PC-3 (cell line): ENCODE measurements at regions of chr19 and their contacts with region 1.

Region 1: GRCh38 chr19:58466760-58467589 is at the start of gene ZNF324:
- DNase-seq: peak; percentile 99
- ATAC-seq: peak; percentile 94
- H3K4me3 ChIP-seq: peak within 1 kb of the TSS; percentile 80
- H3K27ac ChIP-seq: peak within 1 kb of the TSS; percentile 9; the same call in 1 of the 2 replicates
- H3K4me1 ChIP-seq: peaks cover 9% of the 10 kb centered on the region; the same call in 1 of the 2 replicates
- H3K27me3 ChIP-seq: no peaks in the 10 kb centered on the region
- CTCF ChIP-seq: peak; percentile 36
- total RNA-seq, gene ZNF324: 14.8 and 15.9 TPM in 2 replicates

Region 2: GRCh38 chr19:58305065-58305931 is 161.7 kb before region 1 on chr19 and contains the start of gene ERVK3-1:
- CTCF ChIA-PET with region 1: no interaction called
- POLR2A ChIA-PET with region 1: no interaction called
- intact Hi-C with region 1: loop called (anchors 1 kb)
- DNase-seq: peak; percentile 98
- ATAC-seq: peak; percentile 100
- H3K4me3 ChIP-seq: peak within 1 kb of the TSS; percentile 81
- H3K27ac ChIP-seq: peak within 1 kb of the TSS; percentile 8
- H3K4me1 ChIP-seq: peaks cover 8% of the 10 kb centered on the region
- H3K27me3 ChIP-seq: no peaks in the 10 kb centered on the region
- CTCF ChIP-seq: no peak
- total RNA-seq, gene ERVK3-1: 104 and 116 TPM in 2 replicates

Region 3: GRCh38 chr19:58408152-58409009 is 58.6 kb before region 1 on chr19 and contains the start of gene ZNF584:
- CTCF ChIA-PET with region 1: no interaction called
- POLR2A ChIA-PET with region 1: no interaction called
- intact Hi-C with region 1: loop called (anchors 1 kb)
- DNase-seq: peak; percentile 96
- ATAC-seq: peak; percentile 94
- H3K4me3 ChIP-seq: peak within 1 kb of the TSS; percentile 78
- H3K27ac ChIP-seq: 0 out of 2 replicates have a peak within 1 kb of the TSS, but pooled peaks have one; percentile 0
- H3K4me1 ChIP-seq: peaks cover 17% of the 10 kb centered on the region
- H3K27me3 ChIP-seq: no peaks in the 10 kb centered on the region
- CTCF ChIP-seq: peak; percentile 53; the same call in 1 of the 2 replicates
- total RNA-seq, gene ZNF584: 49.2 and 73.8 TPM in 2 replicates

Region 4: DNA sequence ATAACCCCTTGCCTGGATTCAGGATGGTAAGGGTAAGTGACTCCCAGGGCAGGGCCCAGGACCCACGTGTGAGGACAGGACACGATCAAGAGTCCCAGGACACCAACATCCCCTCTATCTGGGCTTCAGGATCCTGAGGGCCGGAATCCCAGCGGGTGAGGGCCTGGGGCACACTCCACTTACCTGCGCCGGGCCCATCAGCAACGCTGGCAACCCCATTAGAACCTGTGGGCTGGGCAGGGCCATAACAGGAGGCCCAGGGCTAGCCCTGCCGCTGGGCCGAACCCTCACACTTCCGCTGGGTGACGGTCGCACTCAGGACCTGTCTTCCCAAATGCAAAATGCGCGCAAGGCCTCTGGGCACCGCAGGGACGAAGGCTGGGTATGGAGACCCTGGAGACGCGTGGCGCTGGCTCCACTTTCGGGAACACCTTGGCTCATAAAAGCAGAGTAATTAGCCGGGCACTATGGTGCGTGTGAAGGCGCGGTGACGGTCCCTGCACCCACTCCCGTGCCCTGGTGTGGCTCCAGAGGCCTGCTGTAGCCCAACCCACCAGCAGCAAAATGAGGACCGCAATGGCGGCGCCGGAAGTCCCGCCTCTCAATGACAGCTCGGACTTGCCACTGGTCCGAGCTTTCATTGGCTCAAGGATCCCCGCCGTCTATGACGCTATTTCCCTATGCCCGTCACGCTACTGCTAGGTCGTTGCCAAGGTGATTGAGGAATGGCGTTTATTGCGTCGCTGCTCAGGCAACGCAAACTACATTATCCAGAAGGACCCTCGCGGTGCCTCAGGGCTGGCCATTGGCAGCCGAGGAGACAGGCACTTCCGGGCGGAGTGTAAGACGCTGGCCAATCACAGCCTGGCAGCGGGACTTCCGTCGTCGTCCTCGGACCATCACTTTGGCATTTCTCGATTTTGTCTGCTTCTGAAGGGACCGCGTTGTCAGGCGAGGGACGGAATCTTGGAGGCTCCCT is 27.1 kb before region 1 on chr19 and contains the start of gene ZNF132:
- CTCF ChIA-PET with region 1: no interaction called
- POLR2A ChIA-PET with region 1: no interaction called
- intact Hi-C with region 1: no loop called
- DNase-seq: no peak
- ATAC-seq: no peak
- H3K4me3 ChIP-seq: no peak within 1 kb of the TSS
- H3K27ac ChIP-seq: no peak within 1 kb of the TSS
- H3K4me1 ChIP-seq: no peaks in the 10 kb centered on the region
- H3K27me3 ChIP-seq: no peaks in the 10 kb centered on the region
- CTCF ChIP-seq: no peak
- total RNA-seq, gene ZNF132: not detected in 2 replicates

Region 5: DNA sequence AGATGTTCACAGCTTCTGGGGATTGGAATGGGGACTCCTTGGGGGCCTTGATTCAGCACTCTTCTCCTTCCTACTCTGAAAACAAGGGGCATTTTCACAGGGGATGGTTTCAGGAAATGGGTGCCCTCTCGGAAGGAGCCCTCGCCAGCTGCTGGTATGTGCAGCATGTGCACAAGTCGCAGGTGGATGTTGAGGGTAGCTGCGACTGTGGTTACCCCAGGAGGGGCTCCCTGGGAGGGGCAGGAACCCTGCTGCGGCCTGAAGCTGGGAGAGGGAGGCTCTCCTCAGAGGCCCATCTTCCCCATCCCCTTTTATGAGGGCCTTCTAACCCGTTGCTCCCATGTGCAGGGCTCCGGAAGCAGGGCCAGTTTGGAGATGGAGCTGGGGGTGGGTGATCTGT is 15.4 kb after region 1 on chr19:
- CTCF ChIA-PET with region 1: no interaction called
- POLR2A ChIA-PET with region 1: no interaction called
- intact Hi-C with region 1: no loop called
- DNase-seq: no peak
- ATAC-seq: no peak
- H3K4me3 ChIP-seq: no peak overlapping the region
- H3K27ac ChIP-seq: no peak overlapping the region
- H3K4me1 ChIP-seq: no peaks in the 10 kb centered on the region
- H3K27me3 ChIP-seq: no peaks in the 10 kb centered on the region
- CTCF ChIP-seq: no peak

Region 6: GRCh38 chr19:58498316-58499020 is 31.5 kb after region 1 on chr19:
- CTCF ChIA-PET with region 1: no interaction called
- POLR2A ChIA-PET with region 1: no interaction called
- intact Hi-C with region 1: no loop called
- DNase-seq: no peak
- ATAC-seq: no peak; the same call in 1 of the 2 replicates
- H3K4me3 ChIP-seq: peak overlapping the region; percentile 69
- H3K27ac ChIP-seq: 0 out of 2 replicates have a peak overlapping the region, but pooled peaks have one; percentile 0
- H3K4me1 ChIP-seq: peaks cover 21% of the 10 kb centered on the region
- H3K27me3 ChIP-seq: no peaks in the 10 kb centered on the region
- CTCF ChIP-seq: no peak

Region 7: GRCh38 chr19:58511353-58512208 is 44.6 kb after region 1 on chr19 and contains the start of gene SLC27A5:
- CTCF ChIA-PET with region 1: no interaction called
- POLR2A ChIA-PET with region 1: no interaction called
- intact Hi-C with region 1: no loop called
- DNase-seq: no peak
- ATAC-seq: 0 out of 2 replicates have a peak, but pooled peaks have one; percentile 9
- H3K4me3 ChIP-seq: no peak within 1 kb of the TSS
- H3K27ac ChIP-seq: no peak within 1 kb of the TSS
- H3K4me1 ChIP-seq: peaks cover 4% of the 10 kb centered on the region; the same call in 1 of the 2 replicates
- H3K27me3 ChIP-seq: no peaks in the 10 kb centered on the region
- CTCF ChIP-seq: no peak
- total RNA-seq, gene SLC27A5: 56.2 and 56.8 TPM in 2 replicates